ENCODE measurements at regions of chr5 and their contacts with region 1.

Region 1: DNA sequence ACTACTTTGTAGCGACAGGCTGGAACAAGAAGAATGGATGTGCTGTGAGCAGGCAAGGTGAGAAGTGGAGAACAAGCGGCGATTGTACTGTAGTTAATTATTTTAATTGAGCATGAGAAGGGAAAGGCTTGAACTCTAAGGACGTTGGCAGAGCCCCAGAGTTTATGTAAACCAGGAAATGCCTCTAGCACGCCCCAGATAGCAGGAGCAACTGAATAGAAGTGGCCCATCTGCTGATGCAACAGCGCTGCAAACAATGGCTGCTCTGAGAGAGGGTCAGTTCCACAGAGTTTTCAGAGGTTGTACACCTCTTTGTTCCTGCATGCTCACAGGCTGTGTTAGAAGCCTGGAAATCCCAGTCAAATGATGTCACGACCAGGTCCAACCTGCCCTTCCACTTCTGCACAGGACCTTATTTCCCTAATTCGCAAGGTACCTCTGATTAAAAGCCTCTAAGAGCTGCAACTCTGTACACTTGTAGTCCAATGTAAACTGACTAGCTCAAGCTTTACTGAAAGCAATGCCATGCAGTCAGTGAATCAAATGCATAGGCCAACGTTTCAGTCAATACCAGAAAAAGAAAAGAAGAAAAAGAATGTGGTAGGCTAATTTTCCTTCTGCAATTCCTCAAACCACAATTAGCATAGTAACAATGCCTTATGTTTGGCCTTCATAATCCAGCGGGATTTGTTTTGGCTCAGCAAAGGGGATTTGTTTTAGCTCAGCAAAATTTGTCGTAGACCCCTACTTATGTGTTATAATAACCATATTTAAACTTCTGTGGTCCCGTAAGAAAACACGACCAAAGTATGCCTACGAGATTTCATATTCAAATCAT is 119.6 kb upstream of the RETREG1 start:
- DNase-seq: peak; percentile 94
- ATAC-seq: peak; percentile 92
- H3K4me3 ChIP-seq: peak overlapping the region; percentile 73 to 91 (median 76)
- H3K27ac ChIP-seq: peak overlapping the region; percentile 97
- H3K4me1 ChIP-seq: peaks cover 40% of the 10 kb centered on the region
- H3K27me3 ChIP-seq: no peaks in the 10 kb centered on the region; a peak in 2 of 5 replicates
- CTCF ChIP-seq: no peak
- EP300 ChIP-seq: peak in 1 of 2 experiments; percentile 83; a peak in 2 of 4 replicates
- POLR2A ChIP-seq: peak; percentile 78 to 92
- RAD21 ChIP-seq: peak; percentile 29; the same call in 1 of the 2 replicates

Region 2: DNA sequence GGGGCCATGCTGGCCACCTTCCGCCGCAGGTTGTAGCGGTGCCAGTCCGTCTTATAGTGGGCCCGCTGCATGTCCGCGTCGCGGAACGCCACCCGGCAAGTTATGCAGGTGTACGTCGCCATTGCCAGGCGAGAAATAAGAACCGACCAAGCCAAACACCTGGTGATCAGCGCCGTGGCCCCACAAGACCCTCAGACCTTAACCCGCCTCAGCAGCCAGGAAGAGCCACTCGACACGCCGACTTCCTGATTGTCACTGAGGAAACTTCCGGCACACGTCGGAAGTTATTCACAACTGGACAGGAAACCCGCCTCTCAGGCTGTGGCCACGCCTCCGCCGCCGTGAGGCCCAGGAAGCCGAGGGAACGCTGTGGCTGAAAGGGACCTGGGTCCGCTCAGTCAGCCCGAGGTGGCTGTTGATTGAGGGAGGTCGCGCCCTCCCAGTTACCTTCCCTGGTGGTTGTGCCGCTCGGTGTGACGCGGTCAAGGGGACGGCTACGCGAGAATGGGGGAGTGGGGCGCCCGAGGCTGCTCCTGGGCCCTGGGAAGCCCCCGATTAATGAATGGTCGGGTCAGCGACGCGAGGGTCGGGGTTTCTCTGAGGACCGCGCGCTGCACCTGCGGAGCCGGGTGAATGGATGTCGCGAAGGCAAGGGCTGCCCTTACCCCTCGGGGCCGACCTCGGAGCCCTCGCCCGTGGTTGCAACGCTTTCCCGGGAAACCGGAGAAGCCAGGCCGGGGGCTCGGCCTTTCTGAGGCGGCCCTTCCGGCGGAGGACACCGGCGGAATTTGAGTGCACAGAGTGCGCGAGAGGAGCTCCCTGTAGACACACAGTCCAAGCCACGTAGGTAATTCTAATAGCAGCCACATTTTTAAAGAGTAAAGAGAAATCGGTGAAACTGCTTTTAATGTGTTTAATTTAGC is 270.6 kb before region 1 on chr5 and contains the start of gene ZNF622:
- CTCF ChIA-PET with region 1: no interaction called
- POLR2A ChIA-PET with region 1: no interaction called
- in situ Hi-C with region 1: no loop called
- intact Hi-C with region 1: loop called (anchors 10 kb)
- DNase-seq: peak; percentile 91
- ATAC-seq: peak; percentile 97
- H3K4me3 ChIP-seq: peak within 1 kb of the TSS; percentile 76 to 99 (median 97)
- H3K27ac ChIP-seq: peak within 1 kb of the TSS; percentile 89
- H3K4me1 ChIP-seq: peaks cover 56% of the 10 kb centered on the region
- H3K27me3 ChIP-seq: no peaks in the 10 kb centered on the region; a peak in 1 of 5 replicates
- CTCF ChIP-seq: no peak
- EP300 ChIP-seq: peak in 1 of 2 experiments; percentile 15; a peak in 2 of 4 replicates
- POLR2A ChIP-seq: peak; percentile 98 to 99
- RAD21 ChIP-seq: no peak; the same call in 1 of the 2 replicates
- total RNA-seq, gene ZNF622: 44.7 and 50.2 TPM in 2 replicates

Region 3: GRCh38 chr5:16690243-16690852 is 46.0 kb before region 1 on chr5:
- CTCF ChIA-PET with region 1: no interaction called
- POLR2A ChIA-PET with region 1: no interaction called
- in situ Hi-C with region 1: no loop called
- intact Hi-C with region 1: loop called (anchors 1 kb)
- DNase-seq: peak; percentile 59
- ATAC-seq: peak; percentile 99
- H3K4me3 ChIP-seq: no peak overlapping the region
- H3K27ac ChIP-seq: no peak overlapping the region
- H3K4me1 ChIP-seq: no peaks in the 10 kb centered on the region
- H3K27me3 ChIP-seq: no peaks in the 10 kb centered on the region
- CTCF ChIP-seq: peak; percentile 80
- EP300 ChIP-seq: no peak
- POLR2A ChIP-seq: no peak
- RAD21 ChIP-seq: peak; percentile 79

Region 4: GRCh38 chr5:16707168-16707868 is 29.1 kb before region 1 on chr5:
- CTCF ChIA-PET with region 1: no interaction called
- POLR2A ChIA-PET with region 1: no interaction called
- in situ Hi-C with region 1: no loop called
- intact Hi-C with region 1: no loop called
- DNase-seq: no peak
- ATAC-seq: no peak
- H3K4me3 ChIP-seq: no peak overlapping the region
- H3K27ac ChIP-seq: no peak overlapping the region
- H3K4me1 ChIP-seq: peaks cover 2% of the 10 kb centered on the region; the same call in 1 of the 2 replicates
- H3K27me3 ChIP-seq: no peaks in the 10 kb centered on the region
- CTCF ChIP-seq: no peak
- EP300 ChIP-seq: no peak
- POLR2A ChIP-seq: no peak
- RAD21 ChIP-seq: no peak

Region 5: DNA sequence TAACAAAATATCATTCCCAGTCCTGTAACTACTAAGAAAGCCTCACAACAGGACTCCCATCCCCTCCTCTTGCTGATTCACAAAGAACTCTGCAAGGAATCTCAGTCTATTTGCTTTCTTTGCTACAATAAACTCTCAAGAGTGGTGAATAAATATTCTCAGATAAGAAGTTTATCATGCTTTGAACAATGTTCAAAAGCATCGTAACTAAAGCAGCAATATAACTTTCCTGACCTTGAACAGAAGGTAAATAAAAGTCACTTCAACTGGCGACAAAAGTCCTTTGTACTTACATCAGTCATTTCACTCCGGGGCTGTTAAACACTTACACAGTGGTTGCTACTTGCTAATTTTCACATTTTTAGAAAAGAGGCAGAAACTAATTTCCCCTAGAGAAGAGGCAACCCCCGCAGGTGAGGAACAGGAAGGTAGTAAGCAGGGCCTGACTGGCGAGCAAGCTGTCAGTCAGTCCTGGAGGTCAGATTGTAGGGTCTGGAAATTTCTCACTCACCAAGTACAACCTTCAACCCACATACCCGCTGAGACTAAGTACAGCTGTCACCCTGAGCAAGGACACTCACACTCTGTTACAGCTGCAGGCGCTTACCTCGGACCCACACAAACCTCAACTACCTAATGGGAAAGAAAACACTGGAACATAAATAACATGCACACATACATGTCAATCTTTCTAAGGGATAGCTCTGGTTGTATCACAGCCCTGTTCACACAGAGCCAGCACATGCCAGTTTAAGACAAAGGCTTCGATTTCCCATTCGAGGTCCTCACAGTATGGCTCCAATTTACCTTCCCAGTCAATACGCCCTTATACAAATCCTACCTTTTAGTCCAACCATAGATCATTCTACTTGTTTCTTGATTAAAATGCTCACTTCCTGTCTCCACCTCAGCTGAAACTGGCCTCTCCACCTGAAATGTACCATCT is 15.0 kb before region 1 on chr5:
- CTCF ChIA-PET with region 1: no interaction called
- POLR2A ChIA-PET with region 1: interaction called, 33 read pairs
- in situ Hi-C with region 1: no loop called
- intact Hi-C with region 1: loop called (anchors 1 kb)
- DNase-seq: peak; percentile 89
- ATAC-seq: peak; percentile 97
- H3K4me3 ChIP-seq: peak overlapping the region in 2 of 3 experiments; percentile 37 to 41; a peak in 2 of 6 replicates
- H3K27ac ChIP-seq: peak overlapping the region; percentile 88
- H3K4me1 ChIP-seq: peaks cover 36% of the 10 kb centered on the region
- H3K27me3 ChIP-seq: no peaks in the 10 kb centered on the region
- CTCF ChIP-seq: no peak
- EP300 ChIP-seq: peak in 1 of 2 experiments; percentile 92; a peak in 2 of 4 replicates
- POLR2A ChIP-seq: 0 out of 4 replicates have a peak, but pooled peaks of 1 of the 2 experiments have one; percentile 24
- RAD21 ChIP-seq: no peak

Region 6: DNA sequence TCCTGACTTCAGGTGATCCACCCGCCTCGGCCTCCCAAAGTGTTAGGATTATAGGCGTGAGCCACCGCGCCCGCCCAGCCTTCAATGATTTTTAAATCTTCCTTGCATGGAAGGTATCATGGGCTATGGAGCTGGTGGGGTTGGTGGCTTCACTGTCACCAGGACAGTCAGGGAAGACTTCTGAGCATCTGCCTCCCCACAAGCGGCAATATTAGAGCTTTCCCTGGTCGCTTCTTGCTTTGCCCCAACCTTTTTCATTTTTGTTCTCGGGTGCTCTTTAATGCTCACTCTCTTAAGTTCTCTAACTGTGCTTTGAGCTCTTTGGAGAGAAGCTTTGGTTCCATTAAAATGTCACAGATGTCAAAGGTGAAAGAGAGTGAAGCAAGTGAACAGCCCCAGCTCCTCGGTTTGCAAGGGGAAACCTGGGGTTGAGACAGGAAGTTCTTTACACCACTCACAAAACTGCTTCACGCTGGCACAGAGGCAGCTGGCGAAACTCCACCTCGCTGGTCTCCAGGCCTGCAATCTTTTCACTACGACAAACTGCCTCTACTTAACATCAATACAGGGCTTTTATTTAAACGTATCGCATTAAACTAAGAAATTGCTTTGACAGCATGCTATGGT is 22.9 kb after region 1 on chr5:
- CTCF ChIA-PET with region 1: no interaction called
- POLR2A ChIA-PET with region 1: interaction called, 91 read pairs
- in situ Hi-C with region 1: no loop called
- intact Hi-C with region 1: loop called (anchors 2 kb)
- DNase-seq: no peak
- ATAC-seq: no peak
- H3K4me3 ChIP-seq: no peak overlapping the region
- H3K27ac ChIP-seq: peak overlapping the region; percentile 60
- H3K4me1 ChIP-seq: peaks cover 32% of the 10 kb centered on the region
- H3K27me3 ChIP-seq: no peaks in the 10 kb centered on the region; a peak in 1 of 5 replicates
- CTCF ChIP-seq: no peak
- EP300 ChIP-seq: no peak
- POLR2A ChIP-seq: no peak
- RAD21 ChIP-seq: no peak

Region 7: DNA sequence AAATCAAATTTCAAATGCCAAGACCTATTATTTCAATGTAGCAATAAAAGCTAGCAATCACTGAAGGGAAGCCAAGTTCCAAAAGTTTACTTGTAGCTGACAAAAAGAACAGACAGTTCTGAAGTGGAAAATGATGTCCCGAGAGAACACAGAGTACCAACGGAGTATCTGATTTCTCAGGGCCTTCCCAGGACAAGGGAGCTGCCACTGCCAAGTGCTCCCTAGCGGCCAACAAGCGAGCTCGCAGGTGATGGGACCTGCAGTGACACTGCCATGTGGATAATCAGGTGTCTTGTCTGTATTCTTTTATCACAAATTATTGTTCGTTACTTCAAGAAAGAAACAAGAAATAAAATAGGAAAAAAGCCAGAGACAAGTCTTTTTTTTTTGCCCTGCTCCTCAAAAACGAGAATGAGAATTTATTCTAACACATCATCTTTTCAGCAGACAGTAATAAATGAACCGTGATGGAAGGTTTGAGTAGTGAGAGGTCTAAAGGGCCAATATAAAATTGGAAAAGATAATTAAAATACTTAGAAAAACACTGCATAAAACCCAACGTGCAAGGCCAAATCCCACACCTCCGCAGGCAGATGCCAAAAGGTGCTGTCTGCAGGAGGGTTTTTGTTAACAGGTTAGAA is 40.4 kb after region 1 on chr5:
- CTCF ChIA-PET with region 1: interaction called, 4 read pairs
- POLR2A ChIA-PET with region 1: interaction called, 6 read pairs
- in situ Hi-C with region 1: no loop called
- intact Hi-C with region 1: loop called (anchors 1 kb)
- DNase-seq: peak; percentile 62
- ATAC-seq: peak; percentile 100
- H3K4me3 ChIP-seq: no peak overlapping the region
- H3K27ac ChIP-seq: no peak overlapping the region
- H3K4me1 ChIP-seq: peaks cover 12% of the 10 kb centered on the region
- H3K27me3 ChIP-seq: no peaks in the 10 kb centered on the region; a peak in 1 of 5 replicates
- CTCF ChIP-seq: peak; percentile 87
- EP300 ChIP-seq: no peak
- POLR2A ChIP-seq: no peak
- RAD21 ChIP-seq: peak; percentile 86

Region 8: GRCh38 chr5:16871746-16872339 is 135.5 kb after region 1 on chr5:
- CTCF ChIA-PET with region 1: no interaction called
- POLR2A ChIA-PET with region 1: no interaction called
- in situ Hi-C with region 1: no loop called
- intact Hi-C with region 1: no loop called
- DNase-seq: no peak
- ATAC-seq: no peak
- H3K4me3 ChIP-seq: no peak overlapping the region
- H3K27ac ChIP-seq: no peak overlapping the region
- H3K4me1 ChIP-seq: no peaks in the 10 kb centered on the region
- H3K27me3 ChIP-seq: no peaks in the 10 kb centered on the region
- CTCF ChIP-seq: no peak
- EP300 ChIP-seq: no peak
- POLR2A ChIP-seq: no peak
- RAD21 ChIP-seq: no peak

Region 9: DNA sequence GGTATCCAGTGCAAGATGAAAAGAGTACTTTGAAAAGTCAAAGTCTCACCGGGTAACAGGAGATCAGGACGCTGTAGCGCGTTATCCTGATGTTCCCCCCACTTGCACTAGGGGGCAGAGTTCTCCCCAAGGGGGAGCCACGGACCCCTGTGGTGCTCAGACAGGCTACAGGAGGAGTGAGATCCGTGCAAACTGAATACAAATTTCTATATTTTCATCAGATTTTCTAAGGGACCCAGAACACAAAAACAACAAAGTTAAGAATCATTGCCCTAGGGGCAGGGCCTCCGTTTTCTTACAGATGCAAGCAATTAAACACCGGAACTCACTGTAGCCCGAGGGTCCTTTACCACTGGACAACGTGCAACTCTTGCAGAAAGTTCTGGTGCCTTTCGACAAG is 197.7 kb after region 1 on chr5:
- CTCF ChIA-PET with region 1: no interaction called
- POLR2A ChIA-PET with region 1: no interaction called
- in situ Hi-C with region 1: no loop called
- intact Hi-C with region 1: no loop called
- DNase-seq: peak; percentile 25
- ATAC-seq: peak; percentile 81
- H3K4me3 ChIP-seq: no peak overlapping the region
- H3K27ac ChIP-seq: no peak overlapping the region
- H3K4me1 ChIP-seq: peaks cover 18% of the 10 kb centered on the region
- H3K27me3 ChIP-seq: peaks cover 3 to 37% of the 10 kb centered on the region in 2 experiments; a peak in 3 of 5 replicates
- CTCF ChIP-seq: peak; percentile 76
- EP300 ChIP-seq: no peak
- POLR2A ChIP-seq: no peak
- RAD21 ChIP-seq: 0 out of 2 replicates have a peak, but pooled peaks have one; percentile 36